ENCODE measurements at regions of chr17 and their contacts with region 1.

Region 1: GRCh38 chr17:2122641-2123302 is 67.9 kb downstream of the HIC1 start:
- DNase-seq: no peak
- ATAC-seq: peak; percentile 79
- H3K4me3 ChIP-seq: no peak overlapping the region
- H3K27ac ChIP-seq: peak overlapping the region; percentile 65
- H3K4me1 ChIP-seq: peaks cover 23% of the 10 kb centered on the region
- H3K27me3 ChIP-seq: no peaks in the 10 kb centered on the region
- CTCF ChIP-seq: 0 out of 6 replicates have a peak, but pooled peaks of 2 of the 3 experiments have one; percentile 1 to 7
- EP300 ChIP-seq: no peak
- POLR2A ChIP-seq: no peak
- RAD21 ChIP-seq: peak; percentile 19; the same call in 1 of the 2 replicates

Region 2: DNA sequence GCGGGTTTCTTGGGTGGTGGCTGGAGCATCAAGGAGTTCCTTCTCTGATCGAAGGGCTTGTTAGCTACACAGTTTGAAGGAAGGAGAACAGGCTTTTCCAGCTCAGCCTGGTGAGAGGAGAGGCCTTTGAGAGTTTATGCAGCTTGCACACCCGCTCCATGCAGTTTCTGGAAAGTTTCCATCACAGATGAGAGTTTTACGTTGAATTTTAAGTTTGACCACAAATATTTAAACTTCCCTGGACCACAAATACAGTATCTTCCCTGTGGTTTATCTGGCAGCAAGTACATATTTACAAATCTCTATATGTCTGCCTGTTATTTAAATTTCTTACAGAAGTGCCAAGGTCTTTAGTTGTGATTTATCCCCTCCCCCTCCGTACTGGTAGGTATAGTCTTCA is 11.1 kb before region 1 on chr17:
- CTCF ChIA-PET with region 1: interaction called, 11 read pairs
- POLR2A ChIA-PET with region 1: interaction called, 4 read pairs
- RAD21 ChIA-PET with region 1: interaction called, 6 read pairs
- SMC1A ChIA-PET with region 1: interaction called, 6 read pairs
- in situ Hi-C with region 1: no loop called
- intact Hi-C with region 1: no loop called
- DNase-seq: no peak
- ATAC-seq: no peak
- H3K4me3 ChIP-seq: no peak overlapping the region
- H3K27ac ChIP-seq: no peak overlapping the region
- H3K4me1 ChIP-seq: peaks cover 23% of the 10 kb centered on the region
- H3K27me3 ChIP-seq: no peaks in the 10 kb centered on the region
- CTCF ChIP-seq: no peak
- EP300 ChIP-seq: no peak
- POLR2A ChIP-seq: no peak
- RAD21 ChIP-seq: no peak